Activated CD4-positive, alpha-beta T cell treated with anti-CD3 and anti-CD28 coated beads for 36 hours (primary cell): ENCODE measurements at regions of chr19 and their contacts with region 1.

Region 1: DNA sequence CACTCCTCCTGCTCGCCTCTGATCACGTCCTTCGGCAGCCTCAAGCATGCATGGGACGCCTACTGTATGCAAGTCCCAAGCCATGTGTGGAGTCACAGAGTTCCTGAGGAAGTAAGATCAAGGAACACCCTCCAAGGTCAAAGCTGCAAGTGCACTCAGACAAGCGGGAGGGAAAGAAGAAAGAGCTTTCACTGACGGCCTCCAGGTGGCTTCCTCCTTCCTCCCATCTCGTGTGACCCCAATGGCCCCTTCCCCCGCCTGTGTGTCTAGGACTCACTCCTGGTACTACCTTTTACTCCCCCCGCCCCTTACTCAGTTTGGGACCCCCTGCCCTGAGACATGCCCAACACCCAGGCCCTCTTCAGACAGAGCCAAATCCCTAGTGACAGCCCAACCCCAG is 6.0 kb downstream of the HAUS8 start:
- DNase-seq: no peak
- ATAC-seq: no peak
- H3K4me3 Mint-ChIP-seq: no peak overlapping the region
- H3K27ac Mint-ChIP-seq: no peak overlapping the region
- H3K4me1 Mint-ChIP-seq: peaks cover 49% of the 10 kb centered on the region
- H3K27me3 Mint-ChIP-seq: no peaks in the 10 kb centered on the region

Region 2: GRCh38 chr19:17183858-17184321 is 114.7 kb after region 1 on chr19:
- CTCF ChIA-PET with region 1: interaction called, 3 read pairs
- POLR2A ChIA-PET with region 1: no interaction called
- intact Hi-C with region 1: loop called in 1 of 2 experiments (anchors 5 kb)
- DNase-seq: peak; percentile 33
- ATAC-seq: peak; percentile 60
- H3K4me3 Mint-ChIP-seq: peak overlapping the region; percentile 59
- H3K27ac Mint-ChIP-seq: peak overlapping the region; percentile 89
- H3K4me1 Mint-ChIP-seq: peaks cover 22% of the 10 kb centered on the region
- H3K27me3 Mint-ChIP-seq: no peaks in the 10 kb centered on the region

Region 3: DNA sequence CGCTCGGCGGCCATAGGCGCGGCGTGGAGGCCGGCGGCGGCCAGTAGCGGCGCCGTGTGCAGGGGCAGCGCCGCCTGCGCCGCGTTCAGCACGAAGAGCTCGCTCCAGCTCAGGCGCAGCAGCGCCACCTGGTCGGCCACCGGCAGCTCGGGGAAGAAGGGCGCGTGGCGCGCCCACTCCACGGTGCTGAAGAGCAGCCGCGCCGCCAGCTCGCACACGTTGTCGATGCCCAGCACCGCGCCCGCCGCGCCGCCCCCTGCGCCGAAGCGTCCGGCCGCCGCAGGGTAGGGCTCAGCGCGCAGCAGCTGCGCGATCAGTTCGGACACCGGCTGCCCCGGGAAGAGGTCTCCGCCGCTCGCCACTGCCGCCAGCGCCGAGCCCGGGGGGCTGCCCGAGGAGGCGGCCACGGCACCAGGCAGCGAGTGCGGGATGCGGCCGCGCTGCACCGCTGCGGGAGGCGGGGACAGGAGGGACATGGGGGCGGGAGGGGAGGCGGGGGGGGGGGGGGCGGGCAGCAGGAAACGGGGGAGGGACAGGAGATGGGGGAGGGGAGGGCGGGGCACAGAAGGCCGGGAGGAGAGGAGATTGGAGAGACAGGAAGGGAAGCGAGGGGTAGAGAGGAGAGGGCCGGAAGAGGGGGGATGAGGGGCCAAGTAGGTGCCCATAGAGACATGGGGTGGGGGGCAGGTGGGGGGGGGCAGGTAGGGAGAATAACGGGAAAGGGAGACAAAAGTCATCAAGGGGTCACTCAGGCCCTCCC is 166.6 kb after region 1 on chr19:
- CTCF ChIA-PET with region 1: interaction called, 4 read pairs
- POLR2A ChIA-PET with region 1: no interaction called
- intact Hi-C with region 1: loop called in 1 of 2 experiments (anchors 1 kb)
- DNase-seq: peak; percentile 87
- ATAC-seq: peak; percentile 85
- H3K4me3 Mint-ChIP-seq: peak overlapping the region; percentile 79
- H3K27ac Mint-ChIP-seq: peak overlapping the region; percentile 65
- H3K4me1 Mint-ChIP-seq: peaks cover 9% of the 10 kb centered on the region
- H3K27me3 Mint-ChIP-seq: no peaks in the 10 kb centered on the region

Region 4: DNA sequence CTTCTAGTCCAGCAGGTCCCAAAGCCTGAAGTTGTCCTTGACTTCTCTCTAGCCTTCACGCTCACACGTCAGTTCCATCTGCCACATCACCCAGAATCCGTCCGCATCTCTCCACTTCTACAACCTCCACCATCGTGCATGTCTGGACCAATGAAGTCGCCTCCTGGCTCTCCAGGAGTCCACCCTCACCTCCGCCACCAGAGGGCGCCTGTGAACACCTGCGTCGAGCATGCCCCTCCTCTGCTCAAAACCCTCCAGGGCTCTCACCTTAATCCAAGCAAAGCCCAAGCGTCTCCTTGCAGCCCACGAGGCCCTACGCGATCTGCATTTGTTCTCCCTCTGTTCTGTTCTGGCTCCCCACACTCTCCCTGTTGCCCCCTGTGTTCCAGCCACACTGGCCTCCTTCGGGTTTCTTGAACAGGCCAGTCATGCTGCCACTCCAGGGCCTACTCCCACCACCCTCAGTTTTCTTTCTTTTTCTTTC is 191.7 kb after region 1 on chr19:
- CTCF ChIA-PET with region 1: no interaction called
- POLR2A ChIA-PET with region 1: no interaction called
- intact Hi-C with region 1: loop called in 1 of 2 experiments (anchors 1 kb)
- DNase-seq: peak; percentile 96
- ATAC-seq: peak; percentile 100
- H3K4me3 Mint-ChIP-seq: no peak overlapping the region
- H3K27ac Mint-ChIP-seq: peak overlapping the region; percentile 56
- H3K4me1 Mint-ChIP-seq: peaks cover 6% of the 10 kb centered on the region
- H3K27me3 Mint-ChIP-seq: no peaks in the 10 kb centered on the region